ENCODE measurements at regions of chr14 and their contacts with region 1.

Region 1: DNA sequence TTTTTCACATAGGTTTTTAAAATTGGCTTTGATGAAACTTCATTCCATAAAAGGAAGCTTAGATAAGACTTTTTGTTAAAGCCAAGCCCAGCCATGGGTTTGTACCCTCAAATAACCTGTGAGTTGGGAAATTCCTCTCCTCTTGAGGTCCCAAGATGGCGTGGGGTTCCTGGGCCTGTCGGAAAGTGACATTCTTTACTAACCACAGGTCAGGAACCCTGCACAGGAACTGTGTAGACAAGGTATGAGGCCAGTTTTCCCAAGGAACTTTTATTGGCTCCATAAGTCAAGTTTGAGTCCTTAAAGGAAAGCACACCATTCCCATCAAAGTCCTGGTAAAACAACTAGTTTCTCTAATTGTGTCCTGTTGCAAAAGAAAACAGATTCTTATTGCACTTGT is 65.0 kb upstream of the AMN start:
- DNase-seq: no peak
- H3K4me3 ChIP-seq: no peak overlapping the region
- H3K4me3 Mint-ChIP-seq: no peak overlapping the region
- H3K27ac ChIP-seq: no peak overlapping the region
- H3K27ac Mint-ChIP-seq: no peak overlapping the region
- H3K4me1 ChIP-seq: no peaks in the 10 kb centered on the region
- H3K4me1 Mint-ChIP-seq: peaks cover 14 to 34% (median 25%) of the 10 kb centered on the region in 3 donors
- H3K27me3 ChIP-seq: no peaks in the 10 kb centered on the region
- H3K27me3 Mint-ChIP-seq: no peaks in the 10 kb centered on the region

Region 2: DNA sequence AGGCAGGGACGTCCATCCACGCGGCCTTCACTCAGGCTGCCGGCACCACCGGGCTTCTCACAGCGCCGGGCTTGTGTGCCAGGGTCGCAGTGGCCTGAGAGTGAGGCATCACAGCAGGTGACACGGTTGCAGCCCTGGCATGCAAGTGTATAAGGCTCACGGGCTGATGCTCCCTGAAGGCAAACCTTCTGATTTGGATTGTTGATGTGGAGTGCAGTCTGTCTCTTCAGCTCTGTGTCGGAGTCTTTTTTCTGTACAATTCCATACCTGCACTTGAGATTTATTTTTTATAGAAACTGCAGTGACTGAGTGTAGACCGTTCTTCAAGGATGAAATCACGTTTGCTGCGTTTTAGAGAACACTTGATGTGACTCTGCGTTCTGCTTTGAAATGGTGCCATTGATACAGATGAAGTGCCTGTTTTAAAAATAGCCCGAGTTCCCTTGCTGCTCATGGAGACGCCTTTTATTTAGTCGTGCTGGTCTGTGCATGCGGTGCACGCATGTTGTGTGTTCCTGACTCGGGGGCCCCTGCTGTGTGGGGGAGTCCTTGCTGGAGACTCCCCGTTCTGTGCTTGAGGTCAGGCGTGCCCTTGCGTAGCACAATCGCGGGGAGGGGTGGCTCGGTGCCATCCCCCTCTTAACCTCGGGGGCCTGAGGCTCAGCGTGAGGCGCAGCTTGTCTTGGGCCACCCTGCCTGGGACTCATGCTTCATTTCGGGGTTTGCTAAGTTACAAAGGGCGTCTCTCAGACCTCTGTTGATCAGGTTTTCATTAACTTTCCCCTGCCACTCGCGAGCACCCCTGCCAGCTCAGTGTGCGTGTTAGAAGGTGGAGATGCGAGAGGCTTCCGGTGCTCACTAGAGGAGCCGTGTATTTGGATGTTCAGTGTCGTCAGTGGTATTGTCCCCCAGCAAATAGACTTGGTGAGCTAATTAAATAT is 43.5 kb after region 1 on chr14:
- CTCF ChIA-PET with region 1: no interaction called
- POLR2A ChIA-PET with region 1: no interaction called
- DNase-seq: peak in 2 of 5 donors; percentile 17 to 55
- H3K4me3 ChIP-seq: no peak overlapping the region
- H3K4me3 Mint-ChIP-seq: peak overlapping the region in 6 of 7 donors; percentile 4 to 77 (median 41)
- H3K27ac ChIP-seq: no peak overlapping the region
- H3K27ac Mint-ChIP-seq: peak overlapping the region; percentile 7 to 93 (median 68)
- H3K4me1 ChIP-seq: peaks cover 17% of the 10 kb centered on the region
- H3K4me1 Mint-ChIP-seq: peaks cover 17 to 18% (median 17%) of the 10 kb centered on the region in 3 donors
- H3K27me3 ChIP-seq: no peaks in the 10 kb centered on the region
- H3K27me3 Mint-ChIP-seq: no peaks in the 10 kb centered on the region

Region 3: DNA sequence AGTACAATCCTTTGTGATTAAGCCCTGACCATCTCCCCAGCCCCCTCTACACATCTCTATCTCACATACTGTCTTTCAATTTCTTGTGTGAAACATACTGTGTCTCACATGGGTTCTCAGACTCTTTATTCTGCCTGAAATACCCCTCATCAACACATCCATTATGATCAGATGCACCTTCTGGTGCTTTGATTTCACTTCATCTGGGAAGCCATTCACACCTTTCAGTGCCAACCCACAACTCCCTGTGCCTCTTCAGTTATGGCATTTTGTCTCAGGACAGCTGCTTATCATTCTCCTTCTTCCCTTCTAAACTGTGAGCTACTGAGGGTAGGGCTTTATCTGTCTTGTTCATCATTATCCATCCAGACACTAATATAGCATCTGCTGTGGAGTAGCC is 606.4 kb after region 1 on chr14:
- CTCF ChIA-PET with region 1: no interaction called
- POLR2A ChIA-PET with region 1: interaction called, 11 read pairs
- DNase-seq: no peak
- H3K4me3 ChIP-seq: no peak overlapping the region
- H3K4me3 Mint-ChIP-seq: no peak overlapping the region
- H3K27ac ChIP-seq: no peak overlapping the region
- H3K27ac Mint-ChIP-seq: peak overlapping the region in 4 of 8 donors; percentile 3 to 69 (median 30)
- H3K4me1 ChIP-seq: peaks cover 8% of the 10 kb centered on the region
- H3K4me1 Mint-ChIP-seq: peaks cover 11 to 19% (median 15%) of the 10 kb centered on the region in 3 donors
- H3K27me3 ChIP-seq: no peaks in the 10 kb centered on the region
- H3K27me3 Mint-ChIP-seq: no peaks in the 10 kb centered on the region